Activated CD4-positive, alpha-beta T cell treated with anti-CD3 and anti-CD28 coated beads, Interleukin-2, amount 10 ng/mL, durations not matched to agents 24 days and 14 days (primary cell): ENCODE measurements at regions of chr10 and their contacts with region 1.

Region 1: DNA sequence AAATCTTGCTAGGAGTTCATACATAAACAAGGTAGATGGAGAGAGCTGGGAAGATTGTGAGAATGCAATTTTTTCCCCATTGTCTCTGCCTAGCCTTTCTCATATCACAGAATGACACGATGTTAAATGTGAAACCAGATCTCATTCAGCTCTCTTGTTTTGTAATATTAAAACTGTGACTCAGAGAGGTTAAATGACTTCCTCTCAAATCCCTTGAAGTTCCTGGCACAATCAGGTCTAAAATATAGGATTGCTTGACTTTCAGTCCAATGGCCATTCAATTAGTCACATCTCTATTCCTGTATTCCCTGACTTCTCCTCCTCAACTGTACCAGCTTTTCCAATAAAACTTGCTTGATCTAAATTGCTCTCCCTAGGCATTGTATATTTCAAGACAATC is 3.1 kb downstream of the ANKRD22 start:
- DNase-seq: no peak
- H3K4me3 Mint-ChIP-seq: peak overlapping the region; percentile 22
- H3K27ac Mint-ChIP-seq: peak overlapping the region; percentile 69
- H3K4me1 Mint-ChIP-seq: peaks cover 21% of the 10 kb centered on the region
- H3K27me3 Mint-ChIP-seq: peaks cover 15% of the 10 kb centered on the region

Region 2: GRCh38 chr10:88880282-88881076 is 32.0 kb after region 1 on chr10:
- intact Hi-C with region 1: loop called (anchors 1 kb)
- DNase-seq: peak; percentile 92
- H3K4me3 Mint-ChIP-seq: peak overlapping the region; percentile 96
- H3K27ac Mint-ChIP-seq: peak overlapping the region; percentile 99
- H3K4me1 Mint-ChIP-seq: peaks cover 59% of the 10 kb centered on the region
- H3K27me3 Mint-ChIP-seq: no peaks in the 10 kb centered on the region